ENCODE measurements at regions of chr22 and their contacts with region 1.

Region 1: DNA sequence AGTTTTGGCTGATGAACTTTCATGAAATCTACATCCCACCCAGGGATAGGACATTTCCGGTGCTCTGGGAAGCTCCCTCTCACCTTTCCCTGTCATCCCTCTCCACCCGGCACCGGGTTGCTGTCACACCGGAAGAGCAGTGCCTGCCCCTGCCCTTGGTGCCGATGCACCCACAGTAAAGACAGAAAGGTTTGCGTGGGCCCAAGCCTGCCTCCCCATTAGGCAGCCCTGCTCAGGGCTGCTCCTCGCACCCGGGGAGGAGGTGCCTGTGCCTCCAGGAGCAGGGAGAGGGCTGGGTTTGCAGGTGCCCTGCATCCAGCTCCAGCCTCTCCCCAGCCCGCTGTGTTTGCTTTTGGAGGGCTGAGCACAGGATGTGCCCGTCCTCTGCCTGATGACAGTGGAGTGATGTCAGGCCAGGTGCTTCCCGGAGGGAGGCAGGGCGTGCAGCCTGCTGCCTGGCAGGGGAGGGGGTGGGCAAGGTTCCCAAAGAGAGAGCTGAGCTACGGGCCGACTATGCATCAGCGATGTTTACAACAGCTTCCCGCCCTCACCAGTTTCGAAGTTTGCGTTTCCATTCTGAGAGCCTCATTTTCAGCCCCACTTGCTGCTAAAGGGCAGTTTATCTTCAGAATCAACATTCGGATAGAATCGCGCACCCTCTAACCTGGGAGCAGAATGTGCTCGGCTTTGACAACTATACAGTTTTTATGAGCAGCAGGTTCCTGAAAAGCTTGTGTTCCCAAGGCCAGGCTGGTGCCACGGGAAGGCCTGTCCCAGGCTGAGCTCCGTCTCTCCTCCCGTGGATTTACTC is 83.2 kb upstream of the CLDN5 start:
- DNase-seq: peak; percentile 85
- ATAC-seq: peak; percentile 80
- H3K4me3 Mint-ChIP-seq: peak overlapping the region; percentile 50
- H3K27ac Mint-ChIP-seq: peak overlapping the region; percentile 82
- H3K4me1 Mint-ChIP-seq: peaks cover 64% of the 10 kb centered on the region
- H3K27me3 Mint-ChIP-seq: no peaks in the 10 kb centered on the region

Region 2: DNA sequence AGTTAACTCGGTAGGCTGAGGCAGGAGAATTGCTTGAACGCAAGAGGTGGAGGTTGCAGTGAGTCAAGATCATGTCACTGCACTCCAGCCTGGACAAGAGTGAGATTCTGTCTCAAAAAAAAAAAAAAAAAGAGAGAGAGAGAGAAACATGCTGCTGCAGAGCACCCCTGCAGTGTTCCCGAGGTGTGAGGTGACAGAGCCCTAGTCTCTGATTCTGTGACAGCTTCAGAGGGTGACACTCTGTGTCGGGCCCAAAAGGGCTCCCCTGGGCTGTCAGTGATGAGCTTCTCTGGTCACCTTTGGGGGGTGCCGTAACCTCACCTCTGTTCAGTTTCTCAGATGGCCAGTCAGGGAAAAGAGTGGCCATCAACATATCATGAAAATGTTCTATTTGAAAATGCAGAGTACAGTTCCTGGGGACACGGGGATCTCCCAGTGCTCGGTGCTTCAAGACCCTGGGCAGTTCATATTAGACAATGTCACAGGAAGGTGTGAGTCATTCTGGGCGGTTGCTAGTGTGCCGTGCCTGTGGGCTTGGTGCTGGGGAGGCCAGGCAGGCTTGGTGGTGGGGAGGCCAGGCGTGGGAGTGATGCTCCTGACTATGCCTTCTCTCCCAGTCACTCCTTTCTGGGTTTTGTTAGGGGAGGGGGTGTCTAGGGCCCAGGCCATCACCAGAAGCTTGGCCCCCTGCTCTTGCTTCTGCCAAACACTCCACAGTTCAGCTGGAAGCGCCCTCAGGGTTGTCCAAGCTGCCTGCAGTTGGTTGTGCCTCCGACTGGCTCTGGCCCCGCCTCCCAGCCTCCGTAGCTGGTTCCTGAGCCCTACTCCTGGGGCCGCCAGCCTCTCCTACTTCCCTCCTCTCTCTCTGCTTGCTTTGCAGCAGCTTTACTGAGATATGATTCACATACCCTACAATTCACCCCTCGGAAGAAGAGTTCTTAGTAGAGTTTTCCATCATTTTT is 30.7 kb before region 1 on chr22:
- CTCF ChIA-PET with region 1: no interaction called
- POLR2A ChIA-PET with region 1: no interaction called
- intact Hi-C with region 1: loop called in 1 of 2 experiments (anchors 2 kb)
- DNase-seq: peak; percentile 86
- ATAC-seq: peak; percentile 88
- H3K4me3 Mint-ChIP-seq: peak overlapping the region; percentile 22
- H3K27ac Mint-ChIP-seq: peak overlapping the region; percentile 91
- H3K4me1 Mint-ChIP-seq: peaks cover 45% of the 10 kb centered on the region
- H3K27me3 Mint-ChIP-seq: no peaks in the 10 kb centered on the region

Region 3: GRCh38 chr22:19663286-19663815 is 56.0 kb after region 1 on chr22:
- CTCF ChIA-PET with region 1: no interaction called
- POLR2A ChIA-PET with region 1: no interaction called
- intact Hi-C with region 1: loop called in 1 of 2 experiments (anchors 10 kb)
- DNase-seq: peak; percentile 31
- ATAC-seq: peak; percentile 55
- H3K4me3 Mint-ChIP-seq: no peak overlapping the region
- H3K27ac Mint-ChIP-seq: no peak overlapping the region
- H3K4me1 Mint-ChIP-seq: no peaks in the 10 kb centered on the region
- H3K27me3 Mint-ChIP-seq: no peaks in the 10 kb centered on the region

Region 4: DNA sequence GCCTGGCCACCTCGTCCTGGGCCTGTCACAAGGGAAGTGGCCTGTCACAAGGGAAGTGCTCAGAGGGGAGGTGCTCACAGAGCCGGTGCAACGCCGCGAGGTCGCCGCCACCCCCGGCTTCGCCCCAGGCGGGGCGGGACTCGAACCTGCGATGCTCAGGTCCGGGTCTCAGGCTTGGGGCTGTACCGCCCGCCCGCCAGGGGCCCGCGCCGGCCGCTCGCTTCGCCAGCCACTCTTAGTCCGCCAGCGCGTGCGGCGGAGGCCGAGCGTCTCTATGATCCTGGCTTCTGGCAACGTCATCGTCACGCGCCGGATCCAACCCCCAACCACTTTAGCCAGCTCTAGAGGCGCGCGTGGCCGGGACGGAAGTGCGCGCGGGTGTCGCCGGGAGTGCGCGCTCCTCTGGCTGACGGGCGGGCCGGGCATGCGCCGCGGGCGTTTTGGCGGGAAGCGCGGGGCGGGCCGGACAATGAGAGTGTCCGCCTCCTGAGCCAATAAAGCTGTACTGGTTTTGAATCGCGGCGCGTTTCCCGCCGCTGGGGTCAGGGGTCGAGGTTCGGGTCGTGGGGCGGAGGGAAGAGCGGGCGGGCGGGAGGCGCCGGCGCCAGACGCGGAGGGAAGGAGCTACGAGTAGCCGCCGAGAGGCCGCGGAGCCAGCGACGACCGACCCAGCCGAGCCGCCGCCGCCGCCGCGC is 509.7 kb after region 1 on chr22 and contains the start of gene TRMT2A:
- CTCF ChIA-PET with region 1: no interaction called
- POLR2A ChIA-PET with region 1: no interaction called
- intact Hi-C with region 1: no loop called
- DNase-seq: peak; percentile 99
- ATAC-seq: peak; percentile 79
- H3K4me3 Mint-ChIP-seq: peak within 1 kb of the TSS; percentile 94
- H3K27ac Mint-ChIP-seq: peak within 1 kb of the TSS; percentile 91
- H3K4me1 Mint-ChIP-seq: peaks cover 47% of the 10 kb centered on the region
- H3K27me3 Mint-ChIP-seq: no peaks in the 10 kb centered on the region
- total RNA-seq, gene TRMT2A: 84.4 to 85.9 TPM